HAP-1 (cell line): ENCODE measurements at regions of chr17 and their contacts with region 1.

Region 1: GRCh38 chr17:19762515-19762961 is 14.4 kb upstream of the ALDH3A1 start:
- DNase-seq: peak; percentile 65 to 91
- H3K4me3 ChIP-seq: no peak overlapping the region
- H3K4me1 ChIP-seq: no peaks in the 10 kb centered on the region
- H3K27me3 ChIP-seq: no peaks in the 10 kb centered on the region

Region 2: DNA sequence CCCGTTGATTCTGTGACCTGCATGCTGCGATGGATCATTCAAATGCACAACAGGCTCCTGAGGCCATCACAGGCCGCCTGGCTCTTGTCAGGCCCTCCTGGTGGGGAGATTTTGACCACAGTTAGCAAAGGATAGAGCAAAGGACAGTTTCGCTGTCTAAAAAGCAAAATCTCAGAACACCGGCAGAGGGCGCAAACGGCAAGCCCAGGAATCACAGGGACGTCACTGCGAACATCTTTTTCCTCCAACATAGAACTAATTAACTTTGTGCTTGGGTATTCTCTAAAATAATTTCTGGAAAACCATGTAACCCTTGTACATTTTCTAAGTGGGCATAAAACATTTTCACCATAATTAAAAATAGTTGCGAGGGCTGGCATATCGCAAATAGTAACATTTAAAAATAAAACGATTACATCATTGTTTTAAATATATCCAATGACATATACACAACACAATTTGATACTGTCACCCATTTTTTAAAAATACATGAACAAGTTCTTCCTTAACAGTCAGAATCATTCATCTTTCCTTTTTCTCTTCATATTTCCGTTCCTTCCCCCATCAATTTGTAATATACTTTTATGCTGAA is 248.5 kb before region 1 on chr17:
- in situ Hi-C with region 1: loop called (anchors 5 kb)
- DNase-seq: peak; percentile 66 to 81
- H3K4me3 ChIP-seq: no peak overlapping the region
- H3K4me1 ChIP-seq: no peaks in the 10 kb centered on the region
- H3K27me3 ChIP-seq: no peaks in the 10 kb centered on the region

Region 3: GRCh38 chr17:19706791-19707727 is 55.5 kb before region 1 on chr17:
- in situ Hi-C with region 1: no loop called
- DNase-seq: peak; percentile 63 to 66
- H3K4me3 ChIP-seq: no peak overlapping the region
- H3K4me1 ChIP-seq: peaks cover 11% of the 10 kb centered on the region
- H3K27me3 ChIP-seq: no peaks in the 10 kb centered on the region

Region 4: DNA sequence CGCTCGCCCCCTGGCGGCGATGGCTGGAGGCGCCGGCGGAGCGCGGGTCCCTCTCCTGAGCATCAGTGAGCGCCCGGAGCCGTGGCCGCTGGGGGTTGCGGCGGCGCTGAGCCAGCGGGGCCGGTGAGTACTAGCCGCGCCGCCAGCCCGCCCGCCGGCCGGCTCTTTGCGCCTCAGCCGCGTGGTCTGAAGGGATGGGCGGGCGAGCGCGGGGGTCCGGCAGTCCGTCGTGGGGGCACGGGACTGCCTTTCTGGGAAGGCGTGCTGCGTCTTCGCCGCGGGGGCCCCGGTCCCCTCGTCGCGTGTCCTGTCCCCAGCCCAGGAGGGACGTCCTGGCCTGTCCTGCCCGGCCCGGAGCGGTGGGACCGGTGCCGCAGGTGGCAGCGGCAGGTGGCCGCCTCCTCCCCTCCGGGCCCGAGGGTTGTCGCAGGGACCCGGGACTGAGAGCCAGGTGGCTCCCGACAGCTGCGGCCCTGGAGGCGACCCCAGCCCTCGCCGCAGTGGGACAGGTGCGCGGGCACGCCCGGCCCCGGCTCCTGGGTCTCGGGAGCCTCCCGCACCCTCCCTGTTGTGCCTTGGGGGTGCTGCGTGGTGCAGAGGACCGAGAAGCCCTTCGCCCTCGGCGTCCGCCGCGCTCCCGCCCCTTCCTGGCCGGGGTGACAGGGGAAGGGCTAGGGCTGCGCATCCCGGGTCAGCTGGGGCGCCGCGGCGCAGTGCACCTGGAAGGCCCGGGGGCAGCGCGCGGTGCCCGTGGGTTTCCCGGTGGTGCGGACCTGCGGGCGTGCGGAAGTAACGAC is 247.0 kb after region 1 on chr17 and contains the start of gene SPECC1:
- in situ Hi-C with region 1: no loop called
- DNase-seq: peak; percentile 72 to 88
- H3K4me3 ChIP-seq: peak within 1 kb of the TSS; percentile 51
- H3K4me1 ChIP-seq: peaks cover 12% of the 10 kb centered on the region
- H3K27me3 ChIP-seq: no peaks in the 10 kb centered on the region